Lower leg skin (tissue), 4 donors: ENCODE measurements at regions of chr6 and their contacts with region 1.

Region 1: DNA sequence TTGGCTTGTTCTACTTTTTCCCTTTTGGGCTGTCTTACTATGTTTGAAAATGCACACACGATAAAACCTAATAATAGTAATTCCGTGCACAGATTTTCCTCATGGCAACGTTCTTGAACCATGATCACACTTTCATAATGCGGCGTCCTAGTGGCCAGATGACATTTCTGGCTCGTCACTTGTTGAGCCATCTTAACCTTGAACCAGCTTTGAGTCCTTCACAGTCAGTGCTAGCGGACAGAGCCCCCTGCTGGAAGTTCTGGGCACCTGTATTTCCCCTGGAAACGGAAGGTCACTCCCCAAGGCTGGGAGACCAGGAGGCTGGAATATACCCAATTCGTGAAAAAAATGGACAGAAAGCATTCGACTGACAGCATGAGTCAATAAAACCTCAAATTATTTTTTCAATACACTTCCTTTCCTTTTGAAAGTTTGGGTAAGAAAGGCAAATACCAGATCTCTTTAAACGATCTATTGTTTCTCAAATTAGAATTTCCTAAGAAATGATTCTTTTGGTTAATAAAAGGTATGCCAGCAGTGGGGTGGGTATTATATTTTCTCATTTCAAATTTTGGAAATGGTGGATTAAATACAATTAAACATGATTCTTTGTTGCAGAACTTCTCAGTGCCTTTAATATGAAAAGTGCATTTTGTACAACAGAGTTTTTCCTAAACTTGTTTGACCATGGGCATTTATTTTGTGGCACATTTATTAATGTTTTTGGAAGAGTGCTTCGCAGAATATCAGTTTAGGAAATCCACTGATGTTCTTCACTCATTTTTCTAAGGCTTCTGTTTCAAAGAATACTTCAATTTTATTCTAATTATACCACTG is 542.3 kb downstream of the QKI start:
- DNase-seq: peak; percentile 82 to 96
- H3K4me3 ChIP-seq: no peak overlapping the region
- CTCF ChIP-seq: peak in 1 of 3 donors; percentile 69
- POLR2A ChIP-seq: no peak

Region 2: GRCh38 chr6:163438940-163439335 is 517.9 kb before region 1 on chr6:
- intact Hi-C with region 1: loop called (anchors 10 kb)
- DNase-seq: no peak
- H3K4me3 ChIP-seq: no peak overlapping the region
- CTCF ChIP-seq: no peak
- POLR2A ChIP-seq: no peak